ENCODE measurements at regions of chr3 and their contacts with region 1.

Region 1: GRCh38 chr3:50154840-50155474 is at the start of gene SEMA3F:
- DNase-seq: peak in 1 of 2 experiments; percentile 83
- H3K4me3 ChIP-seq: peak within 1 kb of the TSS; percentile 69 to 78 (median 72)
- H3K27ac ChIP-seq: no peak within 1 kb of the TSS
- H3K4me1 ChIP-seq: peaks cover 5 to 55% (median 40%) of the 10 kb centered on the region in 4 experiments
- H3K27me3 ChIP-seq: peaks cover 2 to 19% (median 15%) of the 10 kb centered on the region in 4 experiments; a peak in 6 of 7 replicates
- CTCF ChIP-seq: no peak; a peak in 1 of 4 replicates
- EP300 ChIP-seq: no peak
- POLR2A ChIP-seq: no peak
- RAD21 ChIP-seq: no peak; a peak in 1 of 4 replicates
- total RNA-seq, gene SEMA3F: 37.0 and 39.6 TPM in 2 replicates

Region 2: DNA sequence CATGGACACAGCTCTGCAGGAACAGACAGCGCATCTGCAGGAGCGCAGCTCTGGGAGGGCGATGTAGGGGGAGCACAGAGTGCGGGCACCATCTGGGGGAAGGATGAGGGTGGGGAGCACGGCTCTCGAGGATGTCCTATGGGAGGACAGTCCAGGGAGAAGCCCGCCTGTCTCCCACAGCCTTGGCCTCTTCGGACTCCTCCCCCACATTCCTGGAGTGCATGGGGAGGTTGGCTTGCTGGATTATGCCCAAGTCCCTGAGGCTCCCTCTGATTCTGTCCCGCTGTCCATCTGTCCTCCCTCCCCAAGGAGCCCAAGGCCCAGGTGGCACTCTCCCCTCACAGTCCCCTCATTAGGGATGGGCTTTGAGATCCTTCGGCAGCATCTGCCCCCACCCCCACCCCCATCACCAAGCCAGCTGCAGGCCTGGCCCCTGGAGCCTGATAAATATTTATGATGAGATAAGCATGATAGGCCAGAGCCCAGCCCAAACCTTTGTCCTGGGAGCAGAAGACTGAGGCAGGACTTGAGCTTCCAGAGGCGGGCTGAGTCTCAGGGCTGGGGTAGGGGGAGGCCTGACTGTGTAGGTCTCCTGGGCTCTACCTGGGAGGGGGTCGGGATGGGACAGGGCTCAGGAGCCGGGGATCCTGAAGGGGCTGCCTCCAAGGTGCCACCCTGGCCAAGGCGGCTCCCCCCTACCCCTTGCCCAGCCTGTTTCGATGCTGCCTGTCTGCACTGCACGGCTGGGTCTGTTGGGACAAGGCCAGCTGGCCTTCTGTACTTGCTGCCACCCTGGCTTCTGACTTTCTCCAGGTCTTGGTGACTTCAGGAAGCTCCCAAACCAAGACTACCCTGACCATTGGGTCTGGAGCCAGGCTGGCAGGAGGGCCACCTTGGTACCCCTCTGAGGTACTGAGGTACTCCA is 28.4 kb before region 1 on chr3:
- CTCF ChIA-PET with region 1: interaction called, 54 read pairs
- POLR2A ChIA-PET with region 1: interaction called, 65 read pairs
- DNase-seq: peak in 1 of 2 experiments; percentile 58
- H3K4me3 ChIP-seq: no peak overlapping the region
- H3K27ac ChIP-seq: no peak overlapping the region; the same call in none of the 2 replicates
- H3K4me1 ChIP-seq: peaks cover 4 to 32% (median 23%) of the 10 kb centered on the region in 4 experiments
- H3K27me3 ChIP-seq: no peaks in the 10 kb centered on the region
- CTCF ChIP-seq: no peak
- EP300 ChIP-seq: no peak
- POLR2A ChIP-seq: no peak
- RAD21 ChIP-seq: no peak

Region 3: GRCh38 chr3:50138266-50139200 is 16.4 kb before region 1 on chr3:
- CTCF ChIA-PET with region 1: interaction called, 20 read pairs
- POLR2A ChIA-PET with region 1: interaction called, 43 read pairs
- DNase-seq: peak in 1 of 2 experiments; percentile 71
- H3K4me3 ChIP-seq: peak overlapping the region in 3 of 4 experiments; percentile 17 to 45 (median 36); a peak in 3 of 8 replicates
- H3K27ac ChIP-seq: peak overlapping the region; percentile 41; the same call in 1 of the 2 replicates
- H3K4me1 ChIP-seq: peaks cover 4 to 32% (median 28%) of the 10 kb centered on the region in 4 experiments
- H3K27me3 ChIP-seq: no peaks in the 10 kb centered on the region; a peak in 1 of 7 replicates
- CTCF ChIP-seq: no peak
- EP300 ChIP-seq: no peak
- POLR2A ChIP-seq: no peak; a peak in 1 of 3 replicates
- RAD21 ChIP-seq: no peak

Region 4: GRCh38 chr3:50170689-50171088 is 15.7 kb after region 1 on chr3:
- CTCF ChIA-PET with region 1: interaction called, 12 read pairs
- POLR2A ChIA-PET with region 1: interaction called, 11 read pairs
- DNase-seq: no peak
- H3K4me3 ChIP-seq: no peak overlapping the region
- H3K27ac ChIP-seq: no peak overlapping the region
- H3K4me1 ChIP-seq: peaks cover 0 to 22% (median 13%) of the 10 kb centered on the region in 4 experiments; a peak in 6 of 7 replicates
- H3K27me3 ChIP-seq: no peaks in the 10 kb centered on the region
- CTCF ChIP-seq: no peak
- EP300 ChIP-seq: no peak
- POLR2A ChIP-seq: no peak
- RAD21 ChIP-seq: no peak

Region 5: GRCh38 chr3:50177346-50177745 is 22.4 kb after region 1 on chr3:
- CTCF ChIA-PET with region 1: interaction called, 12 read pairs
- POLR2A ChIA-PET with region 1: interaction called, 16 read pairs
- DNase-seq: no peak
- H3K4me3 ChIP-seq: no peak overlapping the region
- H3K27ac ChIP-seq: no peak overlapping the region
- H3K4me1 ChIP-seq: no peaks in the 10 kb centered on the region; a peak in 2 of 7 replicates
- H3K27me3 ChIP-seq: no peaks in the 10 kb centered on the region
- CTCF ChIP-seq: no peak
- EP300 ChIP-seq: no peak
- POLR2A ChIP-seq: no peak
- RAD21 ChIP-seq: no peak

Region 6: GRCh38 chr3:50227390-50228183 is 72.6 kb after region 1 on chr3:
- CTCF ChIA-PET with region 1: interaction called, 10 read pairs
- POLR2A ChIA-PET with region 1: no interaction called
- DNase-seq: peak; percentile 89 to 94
- H3K4me3 ChIP-seq: peak overlapping the region; percentile 51 to 88 (median 73)
- H3K27ac ChIP-seq: peak overlapping the region; percentile 86
- H3K4me1 ChIP-seq: peaks cover 0 to 18% (median 6%) of the 10 kb centered on the region in 4 experiments; a peak in 6 of 7 replicates
- H3K27me3 ChIP-seq: peaks cover 0 to 3% (median 2%) of the 10 kb centered on the region in 4 experiments; a peak in 4 of 7 replicates
- CTCF ChIP-seq: peak in 2 of 3 experiments; percentile 67 to 97; a peak in 3 of 4 replicates
- EP300 ChIP-seq: no peak; a peak in 1 of 3 replicates
- POLR2A ChIP-seq: peak in 1 of 2 experiments; percentile 53; a peak in 2 of 3 replicates
- RAD21 ChIP-seq: peak; percentile 90 to 95